SK-N-SH (cell line): ENCODE measurements at regions of chr6 and their contacts with region 1.

Region 1: DNA sequence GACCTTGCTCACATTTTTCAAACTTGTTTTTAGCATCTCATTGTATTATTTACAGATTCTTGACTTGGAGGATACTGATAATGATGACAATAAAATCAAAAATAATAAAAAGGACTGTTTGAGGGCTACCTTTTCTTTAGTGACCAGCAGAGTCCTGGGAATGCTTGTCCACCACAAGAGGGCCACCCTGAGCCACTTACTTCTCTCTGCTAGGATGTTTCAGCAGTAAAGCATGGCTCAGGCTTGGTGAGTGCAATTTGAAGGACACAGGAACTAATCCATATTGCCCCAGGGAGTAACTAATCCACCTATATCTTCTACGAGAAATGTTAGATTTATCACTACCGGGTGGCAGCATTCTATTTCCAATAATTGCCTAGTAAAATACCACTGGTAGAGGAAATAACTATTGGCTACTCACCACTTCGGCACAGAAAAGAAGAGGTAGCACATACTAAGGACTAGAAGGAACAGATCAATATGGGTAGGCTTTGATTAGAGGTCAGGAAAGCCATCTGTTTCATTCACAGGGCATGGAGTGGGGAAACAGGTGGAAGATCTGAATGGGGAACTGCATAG is 5.8 kb upstream of the KIAA0408 start:
- DNase-seq: peak; percentile 65
- H3K4me3 ChIP-seq: no peak overlapping the region; a peak in 1 of 4 replicates
- H3K27ac ChIP-seq: peak overlapping the region in 1 of 2 experiments; percentile 34; a peak in 2 of 4 replicates
- H3K4me1 ChIP-seq: peaks cover 0 to 4% of the 10 kb centered on the region in 2 experiments; a peak in 1 of 4 replicates
- H3K27me3 ChIP-seq: no peaks in the 10 kb centered on the region
- CTCF ChIP-seq: peak; percentile 96
- EP300 ChIP-seq: no peak
- RAD21 ChIP-seq: peak; percentile 77

Region 2: GRCh38 chr6:127484212-127484858 is 19.4 kb after region 1 on chr6:
- CTCF ChIA-PET with region 1: interaction called, 10 read pairs
- POLR2A ChIA-PET with region 1: no interaction called
- DNase-seq: no peak
- H3K4me3 ChIP-seq: peak overlapping the region in 1 of 2 experiments; percentile 21; a peak in 1 of 4 replicates
- H3K27ac ChIP-seq: peak overlapping the region in 1 of 2 experiments; percentile 66; a peak in 2 of 4 replicates
- H3K4me1 ChIP-seq: peaks cover 0 to 13% of the 10 kb centered on the region in 2 experiments; a peak in 1 of 4 replicates
- H3K27me3 ChIP-seq: no peaks in the 10 kb centered on the region
- CTCF ChIP-seq: no peak
- EP300 ChIP-seq: no peak
- RAD21 ChIP-seq: no peak

Region 3: GRCh38 chr6:127547215-127547614 is 82.2 kb after region 1 on chr6:
- CTCF ChIA-PET with region 1: interaction called, 10 read pairs
- POLR2A ChIA-PET with region 1: no interaction called
- DNase-seq: no peak
- H3K4me3 ChIP-seq: no peak overlapping the region
- H3K27ac ChIP-seq: no peak overlapping the region
- H3K4me1 ChIP-seq: no peaks in the 10 kb centered on the region
- H3K27me3 ChIP-seq: no peaks in the 10 kb centered on the region
- CTCF ChIP-seq: peak; percentile 43
- EP300 ChIP-seq: no peak
- RAD21 ChIP-seq: no peak